Dorsolateral prefrontal cortex (tissue), 120 donors: ENCODE measurements at regions of chr10 and their contacts with region 1.

Region 1: DNA sequence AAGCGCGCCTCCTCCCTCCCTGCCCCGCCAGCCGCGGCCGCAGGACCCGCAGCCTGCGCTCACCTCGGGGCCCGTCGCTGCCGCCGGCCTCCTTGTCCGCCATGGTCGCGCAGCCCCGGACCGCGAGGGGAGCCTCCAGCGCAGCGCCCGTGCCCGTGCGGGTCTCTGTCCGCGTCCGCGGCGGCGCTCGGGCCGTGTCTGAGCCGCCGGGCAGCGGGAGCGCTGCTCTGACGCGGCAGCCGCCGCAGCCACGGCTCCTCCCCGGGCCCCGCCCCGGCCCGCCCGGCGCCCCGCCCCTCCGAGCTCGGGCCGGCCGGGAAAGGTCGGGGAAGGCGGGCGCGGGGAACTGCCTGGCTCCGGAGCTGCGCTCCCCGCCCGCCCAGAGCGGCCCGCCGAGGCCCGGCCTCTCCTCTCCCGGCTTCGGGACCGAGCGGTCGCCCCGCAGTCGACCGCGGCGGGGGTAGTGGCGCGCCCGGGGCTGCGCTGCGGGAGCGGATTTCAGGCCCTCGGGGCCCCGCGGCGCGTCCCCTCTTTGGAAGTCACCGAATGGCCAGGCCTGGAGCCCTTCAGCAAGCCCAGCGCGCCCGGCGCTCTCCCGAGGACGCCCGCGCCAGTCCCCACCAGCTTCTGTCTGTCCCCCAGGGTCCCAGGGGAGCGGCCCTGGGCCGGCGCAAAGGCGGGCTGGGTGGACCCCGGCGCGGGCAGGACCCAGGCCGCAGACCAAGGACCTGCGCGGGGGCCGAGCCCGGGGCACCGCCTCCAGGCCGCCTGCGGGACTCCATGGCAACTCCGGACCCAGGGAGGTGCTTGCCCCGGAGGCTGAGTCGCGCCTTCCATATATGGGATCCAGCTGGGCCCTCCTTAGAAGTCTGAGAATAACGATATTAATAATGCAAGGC is at the start of gene HSPA12A:
- DNase-seq: peak; percentile 37 to 90 (median 71)
- H3K4me3 ChIP-seq: peak within 1 kb of the TSS; percentile 49 to 93 (median 81)
- H3K27ac ChIP-seq: peak within 1 kb of the TSS; percentile 14 to 96 (median 88)
- H3K27me3 ChIP-seq: peaks cover 0 to 9% (median 0%) of the 10 kb centered on the region in 45 donors
- CTCF ChIP-seq: peak in 4 of 56 donors; percentile 4 to 13 (median 12)
- total RNA-seq, gene HSPA12A: 81.7 to 241 (median 174) TPM

Region 2: DNA sequence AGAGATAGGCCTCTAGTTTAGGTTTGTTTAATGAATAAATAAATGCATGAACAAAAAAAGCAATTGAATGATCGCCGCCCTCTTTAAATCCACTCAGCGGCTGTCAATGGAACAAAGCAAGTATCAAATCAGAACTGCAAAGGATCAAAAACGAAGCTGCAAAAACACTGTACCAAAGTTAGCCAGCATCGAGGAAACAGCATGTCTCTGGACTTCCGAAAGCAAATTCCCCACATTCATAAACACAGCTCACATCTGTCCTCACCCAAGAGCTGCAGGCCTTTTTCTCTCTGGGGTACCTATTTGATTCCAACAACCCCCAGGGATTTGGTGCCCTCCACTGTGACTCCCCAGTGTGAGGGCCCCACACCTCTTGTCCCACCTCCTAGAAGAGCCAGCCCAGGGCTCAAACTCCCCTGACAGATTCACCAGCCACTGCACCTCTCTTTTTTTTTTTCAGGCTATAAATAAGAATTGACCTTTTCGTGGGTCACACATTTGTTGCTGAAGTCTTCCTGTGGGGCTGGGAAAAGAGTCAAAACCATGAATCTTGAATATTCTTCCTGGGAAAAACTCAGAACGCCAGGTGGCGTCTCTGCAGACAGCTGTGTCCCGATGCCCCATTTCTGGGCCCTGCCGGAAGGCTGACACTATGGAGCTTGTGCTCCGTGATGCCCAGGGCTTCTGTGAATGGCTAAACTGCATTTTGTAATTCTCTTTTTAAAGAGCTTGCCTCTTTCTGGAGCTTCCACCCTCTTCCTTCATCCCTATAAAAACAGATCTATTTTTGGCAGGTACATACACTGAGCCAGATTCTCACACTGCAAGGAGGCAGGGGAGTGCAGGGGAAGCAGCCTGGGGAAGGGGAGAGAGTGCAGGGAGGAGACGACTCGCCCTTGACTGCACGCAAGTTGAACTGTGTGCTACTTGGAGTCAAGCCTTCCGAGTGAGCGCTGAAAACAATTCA is 52.0 kb before region 1 on chr10:
- intact Hi-C with region 1: loop called (anchors 2 kb)
- DNase-seq: peak in 9 of 10 donors; percentile 14 to 83 (median 68)
- H3K4me3 ChIP-seq: peak overlapping the region in 2 of 59 donors; percentile 8 to 16
- H3K27ac ChIP-seq: peak overlapping the region in 47 of 59 donors; percentile 1 to 85 (median 55)
- H3K27me3 ChIP-seq: no peaks in the 10 kb centered on the region
- CTCF ChIP-seq: peak; percentile 39 to 78 (median 66)

Region 3: GRCh38 chr10:116765547-116766162 is 23.0 kb after region 1 on chr10:
- intact Hi-C with region 1: loop called in 1 of 2 experiments (anchors 1 kb)
- DNase-seq: peak in 6 of 10 donors; percentile 51 to 74 (median 60)
- H3K4me3 ChIP-seq: no peak overlapping the region
- H3K27ac ChIP-seq: no peak overlapping the region
- H3K27me3 ChIP-seq: no peaks in the 10 kb centered on the region
- CTCF ChIP-seq: peak in 54 of 56 donors; percentile 18 to 74 (median 56)

Region 4: GRCh38 chr10:116787893-116788665 is 45.5 kb after region 1 on chr10:
- intact Hi-C with region 1: loop called (anchors 5 kb)
- DNase-seq: peak; percentile 67 to 89 (median 84)
- H3K4me3 ChIP-seq: peak overlapping the region; percentile 13 to 69 (median 48)
- H3K27ac ChIP-seq: peak overlapping the region in 9 of 59 donors; percentile 1 to 66 (median 35)
- H3K27me3 ChIP-seq: no peaks in the 10 kb centered on the region
- CTCF ChIP-seq: peak; percentile 94 to 100 (median 100)